CD8-positive, alpha-beta memory T cell (primary cell): ENCODE measurements at regions of chr18 and their contacts with region 1.

Region 1: DNA sequence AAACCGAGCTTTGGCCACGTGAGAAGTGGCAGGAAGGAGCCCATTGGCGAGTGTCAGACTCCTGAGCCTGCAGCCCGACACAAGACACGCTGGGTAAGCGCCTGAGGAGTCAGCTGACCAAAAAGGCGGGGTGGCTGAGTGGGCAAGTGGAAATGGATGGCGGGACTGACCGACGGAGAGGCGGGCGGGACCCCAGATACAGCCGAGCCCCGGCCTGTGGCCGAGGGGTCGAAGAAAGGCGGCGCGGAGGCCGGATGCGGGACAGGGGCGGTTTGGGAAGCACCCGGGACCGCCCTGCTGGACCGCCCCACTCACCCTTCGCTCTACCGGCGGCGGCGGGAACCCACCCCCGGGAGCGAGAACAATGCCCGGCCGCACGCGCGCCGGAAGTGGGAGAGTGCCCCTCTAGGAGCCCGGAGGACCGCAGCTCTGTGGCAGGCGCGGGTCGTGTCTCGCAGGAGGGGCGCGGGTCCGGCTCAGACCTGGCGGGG is 22.8 kb downstream of the ZSCAN30 start:
- DNase-seq: peak; percentile 51 to 78 (median 64)
- H3K4me3 ChIP-seq: peak overlapping the region; percentile 66
- H3K4me3 Mint-ChIP-seq: peak overlapping the region; percentile 96 to 98 (median 97)
- H3K27ac ChIP-seq: peak overlapping the region; percentile 65
- H3K27ac Mint-ChIP-seq: peak overlapping the region; percentile 80 to 100 (median 96)
- H3K4me1 ChIP-seq: peaks cover 6% of the 10 kb centered on the region
- H3K4me1 Mint-ChIP-seq: peaks cover 23 to 36% (median 35%) of the 10 kb centered on the region in 3 donors
- H3K27me3 ChIP-seq: no peaks in the 10 kb centered on the region
- H3K27me3 Mint-ChIP-seq: peaks cover 0 to 1% of the 10 kb centered on the region in 2 donors

Region 2: DNA sequence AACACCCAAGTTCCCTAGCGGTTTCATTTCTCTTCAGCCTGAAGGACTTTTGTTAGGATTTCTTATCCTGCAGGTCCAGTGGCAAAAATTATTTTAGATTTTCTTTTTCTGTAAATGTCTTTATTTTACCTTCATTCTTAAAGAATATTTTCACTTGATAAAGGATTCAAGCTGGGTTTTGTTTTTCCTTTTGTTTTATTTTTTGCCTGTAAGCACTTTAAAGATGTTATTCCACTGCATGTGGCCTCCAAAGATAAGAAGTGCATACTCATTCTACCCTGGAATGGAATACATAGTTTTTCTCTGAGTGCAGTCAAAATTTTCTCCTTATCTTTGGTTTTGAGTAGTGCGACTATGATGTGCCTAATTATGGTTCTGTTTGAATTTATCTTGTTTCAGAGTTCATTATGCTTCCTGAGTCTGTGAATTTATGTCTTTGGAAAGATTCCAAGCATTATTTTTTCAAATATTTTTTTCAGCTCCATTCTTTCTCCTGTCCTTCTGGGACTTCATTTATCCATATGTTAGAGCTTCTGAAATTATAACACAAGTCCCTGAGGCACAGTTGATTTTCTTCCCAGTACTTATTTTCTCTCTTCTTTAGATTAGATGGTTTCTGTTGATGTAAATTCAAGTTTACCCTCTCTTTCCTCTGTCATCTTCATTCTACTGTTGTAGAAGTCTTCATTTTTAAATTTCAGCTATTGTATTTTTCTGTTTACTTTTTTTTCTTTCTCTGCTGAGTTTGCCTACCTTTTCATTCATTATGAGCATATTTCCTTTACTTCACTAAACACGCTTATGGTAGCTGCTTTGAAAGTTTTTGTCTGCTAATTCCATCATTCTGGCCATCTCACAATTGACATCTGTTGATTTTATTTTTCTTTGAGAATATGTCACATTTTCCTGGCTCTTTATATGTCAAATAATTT is 156.4 kb before region 1 on chr18:
- CTCF ChIA-PET with region 1: no interaction called
- POLR2A ChIA-PET with region 1: no interaction called
- DNase-seq: no peak
- H3K4me3 ChIP-seq: no peak overlapping the region
- H3K4me3 Mint-ChIP-seq: no peak overlapping the region
- H3K27ac ChIP-seq: peak overlapping the region; percentile 61
- H3K27ac Mint-ChIP-seq: peak overlapping the region in 3 of 8 donors; percentile 6 to 58 (median 24)
- H3K4me1 ChIP-seq: peaks cover 15% of the 10 kb centered on the region
- H3K4me1 Mint-ChIP-seq: peaks cover 34 to 69% (median 68%) of the 10 kb centered on the region in 3 donors
- H3K27me3 ChIP-seq: no peaks in the 10 kb centered on the region
- H3K27me3 Mint-ChIP-seq: no peaks in the 10 kb centered on the region

Region 3: DNA sequence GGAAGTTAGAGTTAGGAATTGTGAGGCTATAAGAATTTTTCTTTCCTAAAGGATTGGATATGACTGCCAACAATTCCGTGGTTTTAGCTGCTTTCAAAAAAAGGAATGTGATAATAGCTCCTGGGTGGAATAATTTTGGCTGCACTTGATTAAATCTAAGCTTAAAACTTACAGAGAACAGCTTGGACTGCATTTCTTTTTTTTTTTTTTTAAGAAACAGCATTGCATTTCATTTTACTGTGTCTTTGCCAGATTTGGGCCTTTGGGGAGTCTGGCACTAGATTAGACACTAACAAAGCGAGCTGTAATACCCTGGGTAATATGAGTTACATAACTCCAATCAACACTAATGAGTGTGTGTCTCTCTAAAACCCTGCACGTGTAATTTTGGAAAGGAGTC is 64.1 kb before region 1 on chr18:
- CTCF ChIA-PET with region 1: no interaction called
- POLR2A ChIA-PET with region 1: no interaction called
- DNase-seq: no peak
- H3K4me3 ChIP-seq: no peak overlapping the region
- H3K4me3 Mint-ChIP-seq: no peak overlapping the region
- H3K27ac ChIP-seq: no peak overlapping the region
- H3K27ac Mint-ChIP-seq: no peak overlapping the region
- H3K4me1 ChIP-seq: no peaks in the 10 kb centered on the region
- H3K4me1 Mint-ChIP-seq: no peaks in the 10 kb centered on the region
- H3K27me3 ChIP-seq: no peaks in the 10 kb centered on the region
- H3K27me3 Mint-ChIP-seq: peaks cover 9 to 32% of the 10 kb centered on the region in 2 donors

Region 4: GRCh38 chr18:35240664-35241447 is 26.4 kb before region 1 on chr18 and contains the start of gene ZNF397:
- CTCF ChIA-PET with region 1: no interaction called
- POLR2A ChIA-PET with region 1: interaction called, 14 read pairs
- DNase-seq: peak; percentile 91 to 97 (median 94)
- H3K4me3 ChIP-seq: peak within 1 kb of the TSS; percentile 91
- H3K4me3 Mint-ChIP-seq: peak within 1 kb of the TSS; percentile 96 to 100 (median 97)
- H3K27ac ChIP-seq: peak within 1 kb of the TSS; percentile 97
- H3K27ac Mint-ChIP-seq: peak within 1 kb of the TSS; percentile 97 to 100 (median 98)
- H3K4me1 ChIP-seq: peaks cover 18% of the 10 kb centered on the region
- H3K4me1 Mint-ChIP-seq: peaks cover 18 to 36% (median 35%) of the 10 kb centered on the region in 3 donors
- H3K27me3 ChIP-seq: no peaks in the 10 kb centered on the region
- H3K27me3 Mint-ChIP-seq: peaks cover 0 to 2% of the 10 kb centered on the region in 2 donors
- total RNA-seq, gene ZNF397: 20.9 to 22.5 TPM

Region 5: DNA sequence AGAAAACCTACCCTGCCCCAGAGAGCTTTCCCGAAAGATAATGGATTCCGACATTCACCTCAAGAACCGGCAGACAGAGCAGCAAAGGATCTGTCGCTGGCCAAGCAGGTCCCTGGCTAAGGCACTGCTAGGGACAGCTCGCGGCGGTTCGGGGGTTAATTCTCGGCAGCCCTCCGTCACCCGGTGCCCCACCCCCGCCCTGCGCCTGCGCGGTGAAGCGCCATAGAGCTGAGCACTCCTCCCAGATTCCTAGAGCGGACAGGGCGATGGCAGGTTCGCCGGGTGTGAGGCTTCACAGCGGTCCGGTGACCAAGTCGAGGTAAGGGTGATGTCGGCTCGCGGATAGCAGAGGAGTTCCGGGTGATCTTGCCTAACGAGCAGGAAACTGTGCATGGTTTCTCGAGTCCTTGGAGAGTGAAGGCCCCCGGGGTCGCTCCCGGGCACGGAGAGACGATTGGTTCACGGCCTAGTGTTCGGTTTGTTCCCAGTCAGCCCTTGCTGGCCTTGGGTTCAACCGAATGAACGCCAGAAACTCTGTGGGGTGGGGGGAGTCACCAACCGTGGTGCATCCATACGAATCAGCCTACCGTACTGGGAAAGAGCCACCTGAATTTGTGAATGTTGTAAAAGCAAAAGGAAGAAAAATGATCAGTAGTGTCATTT is 23.0 kb after region 1 on chr18 and contains the start of gene ZSCAN30:
- CTCF ChIA-PET with region 1: interaction called, 15 read pairs
- POLR2A ChIA-PET with region 1: interaction called, 6 read pairs
- DNase-seq: peak; percentile 92 to 96 (median 93)
- H3K4me3 ChIP-seq: peak within 1 kb of the TSS; percentile 96
- H3K4me3 Mint-ChIP-seq: peak within 1 kb of the TSS; percentile 97 to 99 (median 98)
- H3K27ac ChIP-seq: peak within 1 kb of the TSS; percentile 88
- H3K27ac Mint-ChIP-seq: peak within 1 kb of the TSS; percentile 90 to 99 (median 98)
- H3K4me1 ChIP-seq: peaks cover 25% of the 10 kb centered on the region
- H3K4me1 Mint-ChIP-seq: peaks cover 51 to 80% (median 75%) of the 10 kb centered on the region in 3 donors
- H3K27me3 ChIP-seq: no peaks in the 10 kb centered on the region
- H3K27me3 Mint-ChIP-seq: peaks cover 0 to 6% of the 10 kb centered on the region in 2 donors
- total RNA-seq, gene ZSCAN30: 8.9 to 10.8 TPM

Region 6: GRCh38 chr18:35324926-35325655 is 57.9 kb after region 1 on chr18:
- CTCF ChIA-PET with region 1: no interaction called
- POLR2A ChIA-PET with region 1: no interaction called
- DNase-seq: no peak
- H3K4me3 ChIP-seq: no peak overlapping the region
- H3K4me3 Mint-ChIP-seq: no peak overlapping the region
- H3K27ac ChIP-seq: no peak overlapping the region
- H3K27ac Mint-ChIP-seq: no peak overlapping the region
- H3K4me1 ChIP-seq: no peaks in the 10 kb centered on the region
- H3K4me1 Mint-ChIP-seq: no peaks in the 10 kb centered on the region
- H3K27me3 ChIP-seq: no peaks in the 10 kb centered on the region
- H3K27me3 Mint-ChIP-seq: peaks cover 0 to 3% of the 10 kb centered on the region in 2 donors

Region 7: DNA sequence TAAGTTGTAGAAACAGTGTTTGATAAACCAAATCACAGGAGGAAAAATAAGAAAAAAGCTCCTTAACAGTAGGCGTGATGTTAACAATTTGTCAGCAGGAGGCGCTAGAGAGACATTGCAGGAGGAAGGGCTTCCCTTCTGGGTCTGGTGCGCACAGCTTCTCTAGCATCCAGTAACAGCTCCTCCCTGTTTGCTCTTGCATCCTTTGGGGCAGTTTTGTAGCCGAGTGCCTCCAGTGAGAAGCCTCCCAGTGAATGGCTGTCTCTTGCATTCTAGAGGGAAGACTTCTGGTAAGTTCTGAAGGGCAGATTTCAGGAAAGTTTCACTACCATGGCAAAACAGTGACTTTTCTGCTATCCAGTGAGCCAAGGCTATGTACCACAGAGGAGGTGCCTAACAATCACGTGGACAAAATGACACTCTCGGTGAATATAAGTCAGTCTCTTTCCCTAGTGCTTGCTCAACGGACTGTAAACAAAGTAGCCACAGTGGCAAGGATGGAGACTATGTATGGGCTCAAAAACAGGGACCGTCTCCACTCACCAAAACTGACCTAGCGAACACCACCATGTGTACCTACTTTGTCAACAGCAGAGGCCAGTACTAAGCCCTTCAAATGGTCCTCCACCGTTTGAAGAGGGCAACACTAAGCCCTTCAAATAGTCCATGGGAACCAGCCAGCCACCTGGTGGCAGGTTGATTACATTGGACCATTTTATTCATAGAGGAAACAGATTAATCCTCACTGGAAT is 119.6 kb after region 1 on chr18:
- CTCF ChIA-PET with region 1: no interaction called
- POLR2A ChIA-PET with region 1: no interaction called
- DNase-seq: peak; percentile 47 to 76 (median 63)
- H3K4me3 ChIP-seq: no peak overlapping the region
- H3K4me3 Mint-ChIP-seq: peak overlapping the region in 3 of 7 donors; percentile 24 to 45 (median 42)
- H3K27ac ChIP-seq: no peak overlapping the region
- H3K27ac Mint-ChIP-seq: peak overlapping the region in 3 of 8 donors; percentile 4 to 60 (median 58)
- H3K4me1 ChIP-seq: no peaks in the 10 kb centered on the region
- H3K4me1 Mint-ChIP-seq: peaks cover 6 to 10% (median 7%) of the 10 kb centered on the region in 3 donors
- H3K27me3 ChIP-seq: no peaks in the 10 kb centered on the region
- H3K27me3 Mint-ChIP-seq: peaks cover 11 to 34% of the 10 kb centered on the region in 2 donors